ENCODE measurements at regions of chr9 and their contacts with region 1.

Region 1: GRCh38 chr9:121322037-121322775 is 47.8 kb downstream of the STOM start:
- DNase-seq: no peak
- ATAC-seq: no peak
- H3K4me3 Mint-ChIP-seq: no peak overlapping the region
- H3K27ac Mint-ChIP-seq: peak overlapping the region; percentile 50
- H3K4me1 Mint-ChIP-seq: peaks cover 34% of the 10 kb centered on the region
- H3K27me3 Mint-ChIP-seq: no peaks in the 10 kb centered on the region

Region 2: GRCh38 chr9:121278535-121279261 is 43.5 kb before region 1 on chr9:
- CTCF ChIA-PET with region 1: interaction called, 11 read pairs
- POLR2A ChIA-PET with region 1: no interaction called
- DNase-seq: peak; percentile 66
- ATAC-seq: peak; percentile 85
- H3K4me3 Mint-ChIP-seq: no peak overlapping the region
- H3K27ac Mint-ChIP-seq: no peak overlapping the region
- H3K4me1 Mint-ChIP-seq: peaks cover 5% of the 10 kb centered on the region
- H3K27me3 Mint-ChIP-seq: no peaks in the 10 kb centered on the region

Region 3: DNA sequence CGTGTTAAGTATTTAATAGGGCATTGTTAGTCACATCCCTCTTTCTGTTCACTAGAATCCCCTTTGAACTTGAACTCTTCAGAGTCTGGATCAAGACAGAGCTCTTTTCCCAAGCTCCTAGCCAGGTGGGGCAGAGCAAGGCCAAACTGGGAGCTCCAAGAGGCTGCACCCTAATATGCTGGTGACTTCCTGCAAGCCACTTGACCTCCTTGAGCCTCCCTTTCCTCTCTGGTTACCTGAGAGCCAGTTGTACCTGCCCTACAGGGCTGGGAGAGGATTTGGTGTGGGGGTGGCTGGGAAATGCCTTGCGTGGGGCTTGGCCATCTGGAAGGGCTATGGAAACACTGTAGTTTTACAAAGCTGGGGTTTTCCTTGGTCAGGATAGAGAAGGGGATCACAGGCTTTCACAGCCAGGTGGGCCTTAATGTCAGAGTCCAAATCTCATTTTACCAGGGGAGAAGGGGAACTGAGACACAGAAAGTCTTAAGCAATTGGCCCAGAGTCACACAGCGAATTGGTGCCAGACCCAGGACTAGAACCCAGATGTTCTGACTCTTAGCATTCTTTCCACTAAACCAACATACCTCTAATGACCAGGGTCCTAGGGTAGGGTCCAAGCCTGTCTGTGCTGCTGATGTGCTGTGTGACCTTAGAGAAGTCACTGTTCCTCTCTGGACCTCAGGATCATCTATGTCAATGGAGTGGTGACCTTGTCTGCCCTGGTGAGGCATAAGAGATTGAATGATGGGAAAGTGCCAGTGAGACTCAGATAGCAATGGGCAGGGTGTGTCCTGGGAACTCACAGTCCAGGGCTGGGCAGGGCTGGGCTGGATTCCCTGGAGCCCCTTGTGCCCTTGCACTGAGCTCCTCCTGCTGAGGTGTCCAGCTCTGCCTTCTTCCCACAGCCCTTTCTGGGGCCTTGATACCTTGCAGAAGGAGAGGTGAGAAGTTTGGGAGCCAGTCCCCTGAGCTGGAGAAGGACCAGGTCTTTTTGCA is 18.5 kb before region 1 on chr9:
- CTCF ChIA-PET with region 1: interaction called, 18 read pairs
- POLR2A ChIA-PET with region 1: no interaction called
- DNase-seq: no peak
- ATAC-seq: no peak
- H3K4me3 Mint-ChIP-seq: no peak overlapping the region
- H3K27ac Mint-ChIP-seq: no peak overlapping the region
- H3K4me1 Mint-ChIP-seq: peaks cover 12% of the 10 kb centered on the region
- H3K27me3 Mint-ChIP-seq: peaks cover 15% of the 10 kb centered on the region

Region 4: GRCh38 chr9:121340676-121341392 is 18.6 kb after region 1 on chr9:
- CTCF ChIA-PET with region 1: interaction called, 31 read pairs
- POLR2A ChIA-PET with region 1: no interaction called
- DNase-seq: no peak
- ATAC-seq: no peak
- H3K4me3 Mint-ChIP-seq: no peak overlapping the region
- H3K27ac Mint-ChIP-seq: no peak overlapping the region
- H3K4me1 Mint-ChIP-seq: peaks cover 2% of the 10 kb centered on the region
- H3K27me3 Mint-ChIP-seq: no peaks in the 10 kb centered on the region

Region 5: DNA sequence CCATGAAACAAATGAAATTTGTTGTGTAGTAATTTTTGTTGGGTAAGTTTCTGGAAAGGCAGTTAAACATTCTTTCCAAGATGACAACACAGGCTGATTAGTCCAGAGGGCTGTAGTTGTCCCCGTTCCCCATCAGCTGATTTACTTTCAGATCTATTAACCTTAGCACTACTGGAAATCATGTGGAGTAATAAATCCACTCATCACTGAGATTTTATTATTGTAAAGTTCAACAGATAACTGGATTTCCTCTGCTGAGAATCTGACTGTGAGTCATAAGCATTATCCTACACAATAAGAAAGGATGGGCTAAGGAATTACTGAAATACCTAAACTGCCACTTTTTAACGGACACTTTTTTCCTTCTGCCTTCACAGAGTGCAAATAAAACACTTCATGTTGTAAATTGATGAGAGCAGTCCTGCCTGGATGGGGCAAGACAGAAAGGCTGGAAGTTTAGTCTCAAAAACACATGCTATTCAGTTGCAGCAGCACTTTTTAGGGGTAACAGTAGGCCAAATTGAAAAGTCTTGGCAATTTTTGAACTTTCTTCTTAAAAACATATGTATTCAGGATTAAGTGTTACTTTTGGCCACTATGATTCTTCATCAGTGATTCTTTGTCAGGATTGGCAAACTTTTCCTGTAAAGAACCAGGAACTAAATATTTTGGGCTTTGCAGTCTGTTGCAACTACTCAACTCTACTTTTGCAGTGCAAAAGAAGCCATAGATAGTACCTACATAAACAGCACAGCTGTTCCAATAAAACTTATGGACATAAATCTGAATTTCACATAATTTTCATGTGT is 40.8 kb after region 1 on chr9:
- CTCF ChIA-PET with region 1: interaction called, 31 read pairs
- POLR2A ChIA-PET with region 1: no interaction called
- DNase-seq: no peak
- ATAC-seq: no peak
- H3K4me3 Mint-ChIP-seq: no peak overlapping the region
- H3K27ac Mint-ChIP-seq: no peak overlapping the region
- H3K4me1 Mint-ChIP-seq: peaks cover 74% of the 10 kb centered on the region
- H3K27me3 Mint-ChIP-seq: no peaks in the 10 kb centered on the region

Region 6: DNA sequence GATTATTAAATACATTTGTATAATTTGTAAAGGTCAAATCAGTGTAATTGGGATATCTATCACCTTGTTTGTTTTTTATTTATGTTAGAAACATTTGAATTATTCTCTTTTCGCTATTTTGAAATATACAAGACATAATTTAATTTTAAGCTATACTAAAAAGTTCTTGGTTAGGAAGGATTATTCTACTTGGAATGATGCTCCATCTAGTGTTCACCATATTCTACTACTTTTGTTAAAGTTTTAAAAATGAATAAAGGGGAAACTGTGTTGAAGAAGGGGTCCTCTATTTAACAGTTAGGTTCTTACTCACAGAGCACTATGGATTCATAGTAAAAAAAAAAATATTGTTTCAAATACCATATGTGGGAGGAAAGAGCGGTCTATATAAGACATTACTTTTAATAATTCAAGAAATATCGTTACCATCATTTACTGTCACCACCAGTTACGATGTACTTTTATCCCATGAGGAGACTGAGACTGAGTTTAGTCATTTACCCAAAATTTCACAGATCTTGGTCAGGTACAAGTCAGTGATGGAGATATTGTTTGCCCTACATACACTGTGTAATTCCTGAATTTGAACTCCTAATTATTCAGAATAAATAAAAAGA is 54.1 kb after region 1 on chr9:
- CTCF ChIA-PET with region 1: interaction called, 225 read pairs
- POLR2A ChIA-PET with region 1: interaction called, 3 read pairs
- DNase-seq: no peak
- ATAC-seq: no peak
- H3K4me3 Mint-ChIP-seq: no peak overlapping the region
- H3K27ac Mint-ChIP-seq: no peak overlapping the region
- H3K4me1 Mint-ChIP-seq: peaks cover 18% of the 10 kb centered on the region
- H3K27me3 Mint-ChIP-seq: peaks cover 21% of the 10 kb centered on the region

Region 7: GRCh38 chr9:121399883-121400607 is 77.8 kb after region 1 on chr9:
- CTCF ChIA-PET with region 1: interaction called, 336 read pairs
- POLR2A ChIA-PET with region 1: interaction called, 5 read pairs
- DNase-seq: no peak
- ATAC-seq: peak; percentile 57
- H3K4me3 Mint-ChIP-seq: no peak overlapping the region
- H3K27ac Mint-ChIP-seq: no peak overlapping the region
- H3K4me1 Mint-ChIP-seq: peaks cover 7% of the 10 kb centered on the region
- H3K27me3 Mint-ChIP-seq: peaks cover 19% of the 10 kb centered on the region

Measured in activated CD8-positive, alpha-beta T cell treated with anti-CD3 and anti-CD28 coated beads, Interleukin-2, amount 10 ng/mL, durations not matched to agents 7 days and 5 days (primary cell).